Mammary epithelial cell (primary cell): ENCODE measurements at regions of chr5 and their contacts with region 1.

Region 1: GRCh38 chr5:90932052-90932699 is 373.6 kb downstream of the ADGRV1 start:
- DNase-seq: peak; percentile 56
- H3K4me3 ChIP-seq: no peak overlapping the region
- H3K27ac ChIP-seq: no peak overlapping the region
- H3K4me1 ChIP-seq: no peaks in the 10 kb centered on the region
- H3K27me3 ChIP-seq: no peaks in the 10 kb centered on the region
- CTCF ChIP-seq: peak; percentile 73 to 84

Region 2: GRCh38 chr5:90866333-90866732 is 65.8 kb before region 1 on chr5:
- CTCF ChIA-PET with region 1: no interaction called
- dilution Hi-C with region 1: no loop called
- in situ Hi-C with region 1: no loop called
- intact Hi-C with region 1: loop called (anchors 5 kb)
- DNase-seq: no peak
- H3K4me3 ChIP-seq: no peak overlapping the region
- H3K27ac ChIP-seq: no peak overlapping the region
- H3K4me1 ChIP-seq: no peaks in the 10 kb centered on the region
- H3K27me3 ChIP-seq: no peaks in the 10 kb centered on the region
- CTCF ChIP-seq: peak; percentile 41 to 48

Region 3: GRCh38 chr5:90898330-90899013 is 33.7 kb before region 1 on chr5:
- CTCF ChIA-PET with region 1: no interaction called
- dilution Hi-C with region 1: no loop called
- in situ Hi-C with region 1: no loop called
- intact Hi-C with region 1: no loop called
- DNase-seq: peak; percentile 63
- H3K4me3 ChIP-seq: no peak overlapping the region
- H3K27ac ChIP-seq: no peak overlapping the region
- H3K4me1 ChIP-seq: peaks cover 8% of the 10 kb centered on the region
- H3K27me3 ChIP-seq: peaks cover 2% of the 10 kb centered on the region
- CTCF ChIP-seq: no peak

Region 4: DNA sequence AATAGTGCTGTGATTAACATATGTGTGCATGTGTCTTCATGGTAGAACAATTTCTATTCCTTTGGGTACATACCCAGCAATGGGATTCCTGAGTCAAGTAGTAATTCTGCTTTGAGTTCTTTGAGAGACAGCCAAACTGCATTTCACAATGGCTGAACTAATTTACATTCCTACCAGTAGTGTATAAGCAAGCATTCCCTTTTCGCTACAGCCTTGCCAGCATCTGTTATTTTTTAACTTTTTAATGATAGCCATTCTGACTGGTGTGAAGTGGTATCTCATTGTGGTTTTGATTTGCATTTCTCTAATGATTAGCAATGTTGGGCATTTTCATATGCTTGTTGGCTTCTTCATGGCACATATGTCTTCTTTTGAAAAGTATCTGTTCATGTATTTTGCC is 142.4 kb after region 1 on chr5:
- CTCF ChIA-PET with region 1: no interaction called
- dilution Hi-C with region 1: no loop called
- in situ Hi-C with region 1: loop called in 1 of 2 experiments (anchors 25 kb)
- intact Hi-C with region 1: no loop called
- DNase-seq: peak; percentile 36
- H3K4me3 ChIP-seq: no peak overlapping the region
- H3K27ac ChIP-seq: no peak overlapping the region
- H3K4me1 ChIP-seq: no peaks in the 10 kb centered on the region
- H3K27me3 ChIP-seq: no peaks in the 10 kb centered on the region
- CTCF ChIP-seq: peak in 1 of 2 donors; percentile 34

Region 5: GRCh38 chr5:91419571-91420537 is 487.7 kb after region 1 on chr5:
- CTCF ChIA-PET with region 1: no interaction called
- dilution Hi-C with region 1: no loop called
- in situ Hi-C with region 1: no loop called
- intact Hi-C with region 1: loop called (anchors 1 kb)
- DNase-seq: peak; percentile 29
- H3K4me3 ChIP-seq: no peak overlapping the region
- H3K27ac ChIP-seq: no peak overlapping the region
- H3K4me1 ChIP-seq: no peaks in the 10 kb centered on the region
- H3K27me3 ChIP-seq: no peaks in the 10 kb centered on the region
- CTCF ChIP-seq: peak; percentile 32 to 54